ENCODE measurements at regions of chr12 and their contacts with region 1.

Region 1: DNA sequence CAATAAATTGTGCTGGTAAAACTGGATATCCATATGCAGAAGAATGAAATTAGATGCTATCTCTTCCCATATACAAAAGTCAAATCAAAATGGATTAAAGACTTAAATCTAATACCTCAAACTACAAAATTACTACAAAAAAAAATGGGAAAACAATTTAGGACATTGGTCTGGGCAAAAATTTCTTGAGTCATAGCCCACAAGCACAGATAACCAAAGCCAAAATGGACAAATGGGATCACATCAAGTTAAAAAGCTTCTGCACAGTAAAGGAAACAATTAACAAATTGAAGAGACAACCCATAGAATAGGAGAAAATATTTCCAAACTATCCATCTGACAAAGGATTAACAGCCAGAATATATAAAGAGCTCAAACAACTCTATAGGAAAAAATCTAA is 264.6 kb downstream of the NUAK1 start:
- DNase-seq: no peak
- ATAC-seq: no peak
- H3K4me3 ChIP-seq: no peak overlapping the region
- H3K27ac ChIP-seq: no peak overlapping the region
- H3K4me1 ChIP-seq: peaks cover 0 to 7% (median 0%) of the 10 kb centered on the region in 9 donors
- H3K27me3 ChIP-seq: no peaks in the 10 kb centered on the region
- CTCF ChIP-seq: no peak

Region 2: DNA sequence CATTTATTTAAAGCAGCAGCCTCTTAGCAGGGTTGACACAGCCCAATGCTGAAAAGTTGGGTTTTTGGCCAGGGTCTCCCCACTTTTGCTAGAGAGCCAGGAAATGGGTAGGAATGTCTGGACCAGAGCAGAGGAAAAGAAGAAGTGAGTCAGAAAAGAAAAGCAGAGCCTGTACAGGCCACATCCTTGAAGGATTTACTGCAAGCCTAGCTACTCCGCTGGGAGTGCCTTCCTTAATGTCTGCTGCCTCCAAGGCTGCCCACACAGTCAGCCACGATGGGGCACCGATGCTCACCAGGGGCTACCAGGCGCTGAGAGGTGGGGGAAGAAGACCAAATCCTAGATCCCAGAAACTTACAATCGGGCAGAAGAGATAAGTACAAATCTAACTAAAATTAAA is 404.4 kb before region 1 on chr12:
- intact Hi-C with region 1: loop called in 1 of 10 experiments (anchors 5 kb)
- DNase-seq: no peak
- ATAC-seq: no peak
- H3K4me3 ChIP-seq: no peak overlapping the region
- H3K27ac ChIP-seq: peak overlapping the region in 7 of 10 donors; percentile 3 to 84 (median 73)
- H3K4me1 ChIP-seq: peaks cover 10 to 48% (median 17%) of the 10 kb centered on the region in 9 donors
- H3K27me3 ChIP-seq: no peaks in the 10 kb centered on the region
- CTCF ChIP-seq: no peak

Region 3: DNA sequence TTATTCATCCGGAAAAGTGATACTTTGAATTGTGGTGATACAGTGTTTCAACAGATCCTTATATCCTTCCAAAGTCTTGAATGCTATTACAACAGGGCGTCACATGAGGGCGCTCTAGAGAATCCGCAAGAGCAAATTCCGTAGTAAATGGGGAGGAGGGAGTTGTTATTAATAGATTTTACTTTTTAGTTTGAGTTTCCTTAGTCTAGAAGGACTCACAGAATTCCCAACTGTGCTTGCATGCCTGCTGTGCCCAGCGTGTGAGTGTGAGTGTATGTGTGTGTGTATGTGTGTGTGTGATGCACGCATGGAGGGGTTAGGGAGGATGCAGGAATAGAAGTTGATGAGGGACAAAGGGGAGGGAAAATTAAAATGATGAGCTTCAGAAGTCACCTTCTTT is 168.4 kb before region 1 on chr12:
- intact Hi-C with region 1: no loop called
- DNase-seq: peak in 1 of 2 donors; percentile 74
- ATAC-seq: peak; percentile 34 to 79 (median 62)
- H3K4me3 ChIP-seq: no peak overlapping the region
- H3K27ac ChIP-seq: peak overlapping the region in 8 of 10 donors; percentile 22 to 64 (median 46)
- H3K4me1 ChIP-seq: peaks cover 0 to 21% (median 12%) of the 10 kb centered on the region in 9 donors
- H3K27me3 ChIP-seq: no peaks in the 10 kb centered on the region
- CTCF ChIP-seq: peak; percentile 62 to 95 (median 87)